Activated CD4-positive, alpha-beta memory T cell treated with anti-CD3 and anti-CD28 coated beads for 36 hours (primary cell): ENCODE measurements at regions of chrX and their contacts with region 1.

Region 1: DNA sequence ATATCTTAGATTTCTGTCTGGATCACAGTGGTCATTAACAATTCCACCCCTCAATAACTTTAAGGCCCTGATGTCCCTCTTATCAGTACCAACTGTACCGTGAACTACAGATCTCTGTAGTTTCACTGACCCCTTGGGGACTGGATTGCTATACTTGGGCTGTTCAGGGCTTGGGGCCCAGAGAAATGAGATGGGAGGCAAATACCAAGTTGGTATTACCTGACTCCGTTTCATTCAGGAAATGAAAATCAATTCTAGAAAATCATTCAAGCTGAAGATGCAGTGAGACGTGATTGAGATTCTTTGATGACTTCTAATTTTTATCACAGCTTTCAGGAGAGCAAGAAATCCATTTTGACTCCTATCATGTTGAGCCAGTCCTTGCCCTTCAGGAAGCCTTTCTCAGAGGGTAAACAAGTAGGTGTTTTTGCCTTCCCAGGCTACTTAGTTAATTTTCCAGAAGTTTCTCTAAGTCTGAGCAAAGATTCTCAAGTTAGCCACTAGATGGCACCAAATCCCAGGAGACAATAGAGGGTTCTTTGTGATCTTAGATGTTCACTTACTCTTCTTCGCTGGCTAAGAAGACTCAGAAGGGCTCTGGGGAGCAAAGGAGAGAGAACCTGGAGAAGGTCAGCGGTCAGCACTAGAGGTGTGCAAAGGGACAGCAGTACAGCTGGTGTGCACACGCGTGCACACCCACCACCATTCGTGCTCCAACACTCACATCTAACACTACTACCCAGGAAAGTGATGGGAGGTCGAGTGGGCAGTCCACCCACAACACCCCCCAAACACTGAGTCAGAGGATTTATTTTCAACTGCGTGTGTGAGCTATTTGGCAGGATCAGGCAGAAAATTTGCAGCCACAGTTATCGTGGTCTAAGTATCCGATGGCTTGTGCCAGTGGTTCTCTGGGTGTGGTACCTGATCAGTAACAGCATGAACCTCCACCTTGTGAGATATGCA is 7.4 kb downstream of the HNRNPH2 start:
- DNase-seq: no peak
- H3K4me3 Mint-ChIP-seq: peak overlapping the region; percentile 48
- H3K27ac Mint-ChIP-seq: peak overlapping the region; percentile 82
- H3K4me1 Mint-ChIP-seq: peaks cover 47% of the 10 kb centered on the region
- H3K27me3 Mint-ChIP-seq: no peaks in the 10 kb centered on the region

Region 2: GRCh38 chrX:101208152-101208905 is 207.1 kb before region 1 on chrX:
- CTCF ChIA-PET with region 1: no interaction called
- POLR2A ChIA-PET with region 1: no interaction called
- intact Hi-C with region 1: no loop called
- DNase-seq: peak; percentile 10
- H3K4me3 Mint-ChIP-seq: no peak overlapping the region
- H3K27ac Mint-ChIP-seq: peak overlapping the region; percentile 28
- H3K4me1 Mint-ChIP-seq: peaks cover 23% of the 10 kb centered on the region
- H3K27me3 Mint-ChIP-seq: no peaks in the 10 kb centered on the region

Region 3: DNA sequence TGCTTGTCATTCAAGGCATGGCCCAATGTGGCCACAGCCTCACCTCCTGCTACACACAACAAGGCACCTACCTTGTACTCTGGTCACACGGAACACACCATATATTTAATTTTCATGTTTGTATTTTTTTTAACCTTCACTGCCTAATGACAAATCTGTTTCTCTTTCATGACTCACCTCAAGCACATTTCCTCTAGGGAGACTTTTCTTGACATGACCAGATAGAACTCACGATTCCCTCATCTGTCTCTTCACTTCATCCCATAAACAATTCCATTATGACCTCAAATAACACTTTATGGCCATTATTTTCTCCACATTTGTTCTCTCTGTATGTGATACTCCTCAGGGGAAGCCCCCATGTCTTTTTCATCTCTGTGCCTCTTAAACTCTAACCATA is 184.8 kb before region 1 on chrX:
- CTCF ChIA-PET with region 1: no interaction called
- POLR2A ChIA-PET with region 1: no interaction called
- intact Hi-C with region 1: no loop called
- DNase-seq: no peak
- H3K4me3 Mint-ChIP-seq: no peak overlapping the region
- H3K27ac Mint-ChIP-seq: no peak overlapping the region
- H3K4me1 Mint-ChIP-seq: no peaks in the 10 kb centered on the region
- H3K27me3 Mint-ChIP-seq: no peaks in the 10 kb centered on the region

Region 4: DNA sequence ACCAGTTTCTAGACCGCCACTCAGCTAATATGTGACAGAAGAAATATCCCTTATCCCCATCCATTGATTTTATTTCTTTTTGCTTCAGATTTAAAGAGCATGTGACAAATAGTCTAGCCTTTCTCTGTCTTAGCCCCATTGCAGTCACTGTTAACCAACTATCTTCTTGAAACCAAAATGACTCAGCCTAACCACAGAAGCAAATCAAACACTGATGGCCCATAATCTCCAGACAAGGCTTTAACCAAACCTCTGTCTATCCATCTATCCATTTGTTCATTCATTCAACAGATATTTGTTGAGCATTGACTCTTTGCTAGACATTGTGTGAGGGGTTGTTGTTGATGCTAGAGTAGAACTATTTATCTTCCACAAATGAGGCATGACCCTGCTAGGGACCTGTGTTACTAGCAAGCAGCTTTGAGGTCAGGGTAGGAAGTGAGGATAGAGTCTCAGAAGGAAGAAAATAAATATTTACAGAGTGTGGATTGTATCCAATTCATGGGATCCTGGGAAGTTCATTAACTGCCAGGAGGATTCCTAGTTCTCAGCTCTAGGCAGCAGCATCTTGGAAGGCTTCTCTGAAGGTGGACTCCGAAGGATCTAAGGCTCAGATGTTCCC is 15.1 kb after region 1 on chrX:
- CTCF ChIA-PET with region 1: interaction called, 6 read pairs
- POLR2A ChIA-PET with region 1: interaction called, 6 read pairs
- intact Hi-C with region 1: loop called (anchors 1 kb)
- DNase-seq: no peak
- H3K4me3 Mint-ChIP-seq: no peak overlapping the region
- H3K27ac Mint-ChIP-seq: peak overlapping the region; percentile 78
- H3K4me1 Mint-ChIP-seq: peaks cover 13% of the 10 kb centered on the region
- H3K27me3 Mint-ChIP-seq: no peaks in the 10 kb centered on the region

Region 5: GRCh38 chrX:101595739-101596419 is 180.4 kb after region 1 on chrX:
- CTCF ChIA-PET with region 1: interaction called, 5 read pairs
- POLR2A ChIA-PET with region 1: no interaction called
- intact Hi-C with region 1: loop called (anchors 5 kb)
- DNase-seq: no peak
- H3K4me3 Mint-ChIP-seq: no peak overlapping the region
- H3K27ac Mint-ChIP-seq: no peak overlapping the region
- H3K4me1 Mint-ChIP-seq: no peaks in the 10 kb centered on the region
- H3K27me3 Mint-ChIP-seq: peaks cover 6% of the 10 kb centered on the region

Region 6: DNA sequence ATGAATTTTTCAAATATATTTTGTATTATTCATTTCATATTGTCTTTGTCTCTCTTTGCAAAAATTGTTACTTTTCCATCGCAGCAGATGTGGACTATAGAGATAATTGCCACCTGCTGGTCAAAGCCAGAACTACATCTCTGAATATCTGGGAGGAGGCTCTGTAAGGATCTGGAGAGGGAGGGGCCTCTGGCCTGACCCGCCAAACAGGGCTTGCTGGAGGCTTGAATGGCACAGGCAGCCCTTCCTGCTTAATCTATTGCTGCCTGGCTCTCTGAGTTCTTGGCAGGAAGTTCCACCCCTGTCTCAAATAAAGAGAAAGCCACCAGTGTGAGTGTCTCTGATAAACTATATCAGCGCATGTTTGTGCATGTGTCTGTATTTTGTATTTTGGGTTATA is 383.9 kb after region 1 on chrX:
- CTCF ChIA-PET with region 1: interaction called, 4 read pairs
- POLR2A ChIA-PET with region 1: no interaction called
- intact Hi-C with region 1: loop called (anchors 1 kb)
- DNase-seq: peak; percentile 79
- H3K4me3 Mint-ChIP-seq: peak overlapping the region; percentile 57
- H3K27ac Mint-ChIP-seq: no peak overlapping the region
- H3K4me1 Mint-ChIP-seq: no peaks in the 10 kb centered on the region
- H3K27me3 Mint-ChIP-seq: no peaks in the 10 kb centered on the region

Region 7: DNA sequence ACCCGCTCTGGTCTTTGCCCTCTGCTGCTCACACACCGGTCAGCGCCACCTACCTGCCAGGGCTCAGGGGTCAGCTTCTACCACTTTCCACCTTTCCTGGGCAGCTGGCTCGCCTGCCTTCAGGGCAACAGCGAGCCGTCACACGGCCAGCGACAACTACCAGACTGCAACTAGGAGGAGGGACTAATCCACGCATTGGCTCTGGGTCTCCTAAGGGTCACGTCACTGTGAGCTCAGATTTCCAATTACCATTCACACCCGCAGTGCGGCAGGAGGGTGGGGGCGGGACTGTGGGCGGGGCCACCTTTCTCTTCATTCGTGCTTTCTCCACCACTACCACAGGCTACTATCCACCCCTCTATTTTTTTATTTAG is 740.3 kb after region 1 on chrX and contains the start of gene BEX5:
- CTCF ChIA-PET with region 1: no interaction called
- POLR2A ChIA-PET with region 1: no interaction called
- intact Hi-C with region 1: loop called (anchors 5 kb)
- DNase-seq: peak; percentile 77
- H3K4me3 Mint-ChIP-seq: peak within 1 kb of the TSS; percentile 98
- H3K27ac Mint-ChIP-seq: peak within 1 kb of the TSS; percentile 91
- H3K4me1 Mint-ChIP-seq: peaks cover 10% of the 10 kb centered on the region
- H3K27me3 Mint-ChIP-seq: peaks cover 7% of the 10 kb centered on the region
- total RNA-seq, gene BEX5: 7.0 to 8.4 TPM